CD8-positive, alpha-beta T cell (primary cell): ENCODE measurements at regions of chr16 and their contacts with region 1.

Region 1: GRCh38 chr16:31179747-31180459 is at the start of gene FUS:
- DNase-seq: peak; percentile 86 to 97 (median 90)
- ATAC-seq: peak; percentile 73
- H3K4me3 ChIP-seq: peak within 1 kb of the TSS; percentile 80 to 90
- H3K4me3 Mint-ChIP-seq: peak within 1 kb of the TSS; percentile 98
- H3K27ac ChIP-seq: peak within 1 kb of the TSS; percentile 88 to 95
- H3K27ac Mint-ChIP-seq: peak within 1 kb of the TSS; percentile 99
- H3K4me1 ChIP-seq: peaks cover 63% of the 10 kb centered on the region
- H3K4me1 Mint-ChIP-seq: peaks cover 60% of the 10 kb centered on the region
- H3K27me3 ChIP-seq: no peaks in the 10 kb centered on the region
- H3K27me3 Mint-ChIP-seq: no peaks in the 10 kb centered on the region
- CTCF ChIP-seq: no peak
- total RNA-seq, gene FUS: 734 to 742 TPM

Region 2: DNA sequence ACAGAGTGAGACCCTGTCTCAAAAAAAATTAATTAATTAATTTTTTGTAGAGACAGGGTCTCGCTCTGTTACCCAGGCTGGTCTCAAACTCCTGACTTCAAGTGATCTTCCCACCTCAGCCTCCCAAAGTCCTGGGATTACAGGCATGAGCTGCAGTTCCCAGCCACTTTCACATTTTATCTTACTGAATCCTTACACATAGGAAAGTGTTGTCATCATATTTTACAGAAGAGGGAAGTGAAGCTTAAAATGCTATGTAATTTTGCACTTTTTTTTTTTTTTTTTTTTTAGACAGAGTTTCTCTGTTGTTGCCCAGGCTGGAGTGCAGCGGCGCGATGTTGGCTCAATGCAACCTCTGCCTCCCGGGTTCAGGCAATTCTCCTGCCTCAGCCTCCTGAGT is 371.8 kb before region 1 on chr16:
- CTCF ChIA-PET with region 1: no interaction called
- POLR2A ChIA-PET with region 1: no interaction called
- intact Hi-C with region 1: no loop called
- DNase-seq: no peak
- ATAC-seq: no peak
- H3K4me3 ChIP-seq: no peak overlapping the region
- H3K4me3 Mint-ChIP-seq: no peak overlapping the region
- H3K27ac ChIP-seq: no peak overlapping the region
- H3K27ac Mint-ChIP-seq: no peak overlapping the region
- H3K4me1 ChIP-seq: peaks cover 18% of the 10 kb centered on the region
- H3K4me1 Mint-ChIP-seq: peaks cover 17% of the 10 kb centered on the region
- H3K27me3 ChIP-seq: no peaks in the 10 kb centered on the region
- H3K27me3 Mint-ChIP-seq: no peaks in the 10 kb centered on the region
- CTCF ChIP-seq: no peak

Region 3: DNA sequence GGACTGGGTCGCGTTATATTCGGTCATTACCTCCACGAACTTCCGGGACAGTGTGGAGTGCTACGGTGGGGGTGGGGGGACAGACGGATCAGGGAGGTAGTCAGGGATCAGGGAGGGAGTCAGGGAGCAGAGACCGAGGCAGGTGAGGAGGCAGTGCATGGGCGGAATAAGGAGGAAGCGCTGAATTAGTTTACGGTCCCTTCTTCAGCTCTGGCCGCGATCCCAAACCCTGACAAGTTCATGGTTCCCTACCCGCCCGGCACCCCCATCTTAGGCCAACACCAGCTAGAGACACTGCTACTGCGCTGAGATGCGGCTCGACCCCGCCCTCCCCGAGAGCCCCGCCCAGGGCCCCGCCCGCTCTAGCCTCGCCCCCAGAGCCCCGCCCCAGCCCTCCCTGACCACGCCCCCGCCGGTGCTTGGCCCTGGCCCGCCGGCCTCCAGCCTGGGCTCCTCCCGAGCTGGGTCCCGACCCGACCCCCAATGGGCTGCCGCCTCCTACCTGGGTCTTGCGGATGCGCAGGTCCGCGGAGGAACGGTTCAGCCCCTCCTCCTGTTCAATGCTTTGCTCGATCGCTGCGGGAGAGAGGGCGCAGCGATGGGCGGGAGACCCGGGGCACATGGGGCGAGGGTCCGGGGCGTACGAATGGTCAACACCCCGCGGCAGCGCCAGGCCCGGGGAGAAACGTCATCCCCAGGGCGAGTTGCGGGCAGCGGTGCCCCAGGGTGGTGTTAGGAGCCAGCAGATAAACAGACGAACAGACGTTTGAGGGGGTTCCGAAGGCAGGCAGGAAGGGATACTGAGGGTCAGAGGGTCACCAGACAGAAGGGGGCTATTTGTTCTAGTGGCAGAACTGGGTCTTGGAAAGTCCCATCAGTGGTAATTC is 182.7 kb before region 1 on chr16:
- CTCF ChIA-PET with region 1: no interaction called
- POLR2A ChIA-PET with region 1: no interaction called
- intact Hi-C with region 1: no loop called
- DNase-seq: peak; percentile 67 to 88 (median 80)
- ATAC-seq: peak; percentile 99
- H3K4me3 ChIP-seq: peak overlapping the region; percentile 61 to 93
- H3K4me3 Mint-ChIP-seq: peak overlapping the region; percentile 85
- H3K27ac ChIP-seq: peak overlapping the region; percentile 40 to 55
- H3K27ac Mint-ChIP-seq: peak overlapping the region; percentile 90
- H3K4me1 ChIP-seq: peaks cover 11% of the 10 kb centered on the region
- H3K4me1 Mint-ChIP-seq: peaks cover 10% of the 10 kb centered on the region
- H3K27me3 ChIP-seq: no peaks in the 10 kb centered on the region
- H3K27me3 Mint-ChIP-seq: no peaks in the 10 kb centered on the region
- CTCF ChIP-seq: no peak

Region 4: DNA sequence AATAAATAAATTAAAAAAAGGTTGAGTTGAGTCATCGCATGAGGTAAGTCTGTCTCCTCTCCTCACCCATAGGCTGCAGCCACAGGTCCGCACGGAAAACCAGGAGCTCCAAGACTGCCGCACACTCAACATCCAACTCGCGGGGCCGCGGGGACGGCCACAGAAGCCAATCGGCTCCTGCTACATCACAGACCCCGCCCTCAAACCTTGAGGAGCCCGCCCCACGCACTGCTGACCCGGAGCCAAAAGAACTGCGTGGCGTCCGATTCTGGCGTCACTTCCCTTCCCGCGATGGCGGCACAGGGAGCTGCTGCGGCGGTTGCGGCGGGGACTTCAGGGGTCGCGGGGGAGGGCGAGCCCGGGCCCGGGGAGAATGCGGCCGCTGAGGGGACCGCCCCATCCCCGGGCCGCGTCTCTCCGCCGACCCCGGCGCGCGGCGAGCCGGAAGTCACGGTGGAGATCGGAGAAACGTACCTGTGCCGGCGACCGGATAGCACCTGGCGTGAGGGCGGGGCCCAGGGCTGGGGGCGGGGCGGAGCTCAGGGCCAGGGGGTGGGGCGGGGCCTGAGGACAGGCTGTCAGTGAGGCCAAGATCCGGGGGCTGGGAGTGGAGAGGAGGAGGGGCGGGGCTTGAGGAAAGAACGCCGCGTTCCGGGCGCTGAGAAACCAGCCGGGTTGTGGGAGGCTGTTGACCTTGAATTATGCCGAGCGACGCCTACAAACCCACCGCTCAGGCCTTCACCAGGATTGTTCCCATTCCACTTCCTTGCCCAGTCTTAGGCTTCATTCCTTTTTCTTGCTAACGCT is 62.3 kb before region 1 on chr16 and contains the start of gene KAT8:
- CTCF ChIA-PET with region 1: no interaction called
- POLR2A ChIA-PET with region 1: interaction called, 33 read pairs
- intact Hi-C with region 1: loop called (anchors 1 to 2 kb)
- DNase-seq: peak; percentile 92 to 99 (median 97)
- ATAC-seq: peak; percentile 92
- H3K4me3 ChIP-seq: peak within 1 kb of the TSS; percentile 53 to 93
- H3K4me3 Mint-ChIP-seq: peak within 1 kb of the TSS; percentile 74
- H3K27ac ChIP-seq: peak within 1 kb of the TSS; percentile 83 to 96
- H3K27ac Mint-ChIP-seq: peak within 1 kb of the TSS; percentile 95
- H3K4me1 ChIP-seq: peaks cover 11% of the 10 kb centered on the region
- H3K4me1 Mint-ChIP-seq: peaks cover 18% of the 10 kb centered on the region
- H3K27me3 ChIP-seq: no peaks in the 10 kb centered on the region
- H3K27me3 Mint-ChIP-seq: no peaks in the 10 kb centered on the region
- CTCF ChIP-seq: no peak
- total RNA-seq, gene KAT8: 105 to 107 TPM

Region 5: DNA sequence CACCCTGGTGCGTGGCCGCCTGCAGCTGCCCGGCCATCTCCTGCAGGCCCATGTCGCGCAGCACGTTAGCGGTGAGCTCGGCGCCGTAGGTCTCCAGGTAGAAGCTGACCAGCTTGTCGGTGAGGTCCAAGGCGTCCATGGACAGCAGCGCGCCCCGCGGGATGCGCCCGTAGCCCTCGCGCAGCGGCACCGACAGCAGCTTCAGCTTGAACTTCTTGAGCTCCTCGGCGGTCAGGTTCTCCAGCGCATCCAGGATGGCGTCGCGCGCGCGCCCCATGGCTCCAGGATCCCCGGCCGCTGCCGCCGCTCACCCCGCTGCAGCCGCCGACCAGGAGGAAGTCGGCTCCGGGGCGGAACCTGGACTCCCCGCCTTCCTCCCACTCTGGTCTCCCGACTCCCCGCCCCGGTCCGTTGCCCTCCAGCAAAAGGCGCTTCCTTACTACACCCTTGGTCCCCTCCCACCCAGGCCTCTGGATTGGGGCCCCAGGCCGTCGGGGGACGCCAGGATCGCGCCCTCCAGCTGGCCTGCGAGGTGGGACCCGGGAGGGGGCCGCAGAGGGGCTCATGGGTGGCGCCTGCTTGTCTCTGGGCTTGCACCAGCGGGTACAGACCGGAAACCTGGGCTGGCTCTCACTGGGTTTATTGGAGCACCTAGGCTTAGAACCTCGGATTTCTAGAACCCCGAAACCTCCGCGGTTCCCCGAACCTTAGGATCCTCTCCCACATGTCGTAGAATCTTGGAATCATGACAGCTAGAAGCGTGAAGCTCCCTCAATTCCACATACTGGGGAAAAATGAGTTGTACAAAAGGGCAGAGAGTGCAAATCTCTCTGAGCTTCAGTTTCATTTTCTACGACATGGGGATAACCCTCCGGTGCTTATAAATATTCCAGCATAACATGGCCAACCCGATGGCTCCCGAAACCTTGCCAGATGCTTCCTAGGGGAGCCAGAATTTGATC is 22.8 kb after region 1 on chr16 and contains the start of gene PYCARD:
- CTCF ChIA-PET with region 1: interaction called, 5 read pairs
- POLR2A ChIA-PET with region 1: interaction called, 104 read pairs
- intact Hi-C with region 1: loop called (anchors 2 kb)
- DNase-seq: peak in 5 of 9 experiments; percentile 21 to 59 (median 43)
- ATAC-seq: peak; percentile 24
- H3K4me3 ChIP-seq: peak within 1 kb of the TSS; percentile 93 to 96
- H3K4me3 Mint-ChIP-seq: peak within 1 kb of the TSS; percentile 91
- H3K27ac ChIP-seq: peak within 1 kb of the TSS; percentile 53 to 64
- H3K27ac Mint-ChIP-seq: peak within 1 kb of the TSS; percentile 88
- H3K4me1 ChIP-seq: peaks cover 46% of the 10 kb centered on the region
- H3K4me1 Mint-ChIP-seq: peaks cover 46% of the 10 kb centered on the region
- H3K27me3 ChIP-seq: no peaks in the 10 kb centered on the region
- H3K27me3 Mint-ChIP-seq: no peaks in the 10 kb centered on the region
- CTCF ChIP-seq: no peak
- total RNA-seq, gene PYCARD: 6.4 to 6.6 TPM

Region 6: GRCh38 chr16:31224092-31224955 is 44.4 kb after region 1 on chr16:
- CTCF ChIA-PET with region 1: no interaction called
- POLR2A ChIA-PET with region 1: no interaction called
- intact Hi-C with region 1: no loop called
- DNase-seq: no peak
- ATAC-seq: no peak
- H3K4me3 ChIP-seq: no peak overlapping the region
- H3K4me3 Mint-ChIP-seq: no peak overlapping the region
- H3K27ac ChIP-seq: no peak overlapping the region
- H3K27ac Mint-ChIP-seq: no peak overlapping the region
- H3K4me1 ChIP-seq: no peaks in the 10 kb centered on the region
- H3K4me1 Mint-ChIP-seq: no peaks in the 10 kb centered on the region
- H3K27me3 ChIP-seq: peaks cover 0 to 3% of the 10 kb centered on the region in 2 experiments
- H3K27me3 Mint-ChIP-seq: peaks cover 4% of the 10 kb centered on the region
- CTCF ChIP-seq: no peak

Region 7: GRCh38 chr16:31382485-31383161 is 202.7 kb after region 1 on chr16:
- CTCF ChIA-PET with region 1: interaction called, 4 read pairs
- POLR2A ChIA-PET with region 1: interaction called, 4 read pairs
- intact Hi-C with region 1: loop called in 1 of 2 experiments (anchors 10 kb)
- DNase-seq: peak; percentile 35 to 81 (median 66)
- ATAC-seq: peak; percentile 60
- H3K4me3 ChIP-seq: no peak overlapping the region
- H3K4me3 Mint-ChIP-seq: no peak overlapping the region
- H3K27ac ChIP-seq: no peak overlapping the region
- H3K27ac Mint-ChIP-seq: no peak overlapping the region
- H3K4me1 ChIP-seq: peaks cover 1% of the 10 kb centered on the region
- H3K4me1 Mint-ChIP-seq: peaks cover 9% of the 10 kb centered on the region
- H3K27me3 ChIP-seq: no peaks in the 10 kb centered on the region
- H3K27me3 Mint-ChIP-seq: peaks cover 4% of the 10 kb centered on the region
- CTCF ChIP-seq: peak; percentile 72

Region 8: DNA sequence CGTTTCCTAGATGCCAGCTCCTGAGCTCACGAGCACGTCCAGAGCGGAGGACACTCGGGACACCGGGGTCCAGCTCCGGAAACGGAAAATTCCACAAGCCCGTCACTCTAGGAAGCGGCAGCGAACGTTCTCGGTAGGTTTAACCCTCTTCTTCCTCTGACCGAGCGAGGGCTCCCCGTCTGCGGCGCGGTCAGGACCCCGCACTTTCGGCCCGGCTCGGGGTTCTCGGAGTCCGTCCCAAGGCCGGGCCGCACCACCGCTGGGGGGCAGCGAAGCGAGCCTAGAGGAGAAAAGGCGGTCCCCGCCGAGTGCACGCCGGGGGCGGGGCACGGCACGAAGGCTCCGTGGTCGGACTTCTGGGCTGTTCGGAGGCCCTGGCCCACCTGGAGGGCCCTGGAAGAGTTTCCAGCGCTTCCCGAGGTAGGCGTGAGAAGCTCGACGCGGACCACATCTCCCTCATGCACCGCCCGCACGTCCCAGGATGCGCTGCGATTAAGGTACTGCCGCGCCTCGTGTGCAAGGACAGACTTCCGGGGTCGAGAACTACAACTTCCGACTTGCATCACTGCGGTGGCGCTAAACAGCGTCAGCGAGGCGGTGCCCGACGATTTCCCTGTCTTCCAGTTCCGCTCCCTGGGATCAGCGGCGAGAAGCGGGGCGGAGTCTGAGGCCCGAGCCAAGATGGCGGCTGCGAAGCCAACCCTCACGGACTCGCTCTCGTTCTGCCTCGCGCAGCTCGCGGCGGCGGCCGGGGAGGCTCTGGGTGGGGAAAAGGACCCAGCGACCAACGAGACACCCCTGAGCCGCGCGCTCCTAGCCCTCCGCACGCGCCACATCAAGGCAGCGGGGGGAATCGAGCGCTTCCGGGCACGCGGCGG is 279.2 kb after region 1 on chr16 and contains the start of gene ARMC5:
- CTCF ChIA-PET with region 1: no interaction called
- POLR2A ChIA-PET with region 1: interaction called, 31 read pairs
- intact Hi-C with region 1: loop called (anchors 1 kb)
- DNase-seq: peak; percentile 91 to 99 (median 96)
- ATAC-seq: peak; percentile 69
- H3K4me3 ChIP-seq: peak within 1 kb of the TSS; percentile 73 to 99
- H3K4me3 Mint-ChIP-seq: peak within 1 kb of the TSS; percentile 95
- H3K27ac ChIP-seq: peak within 1 kb of the TSS; percentile 97 to 100
- H3K27ac Mint-ChIP-seq: peak within 1 kb of the TSS; percentile 99
- H3K4me1 ChIP-seq: peaks cover 40% of the 10 kb centered on the region
- H3K4me1 Mint-ChIP-seq: peaks cover 50% of the 10 kb centered on the region
- H3K27me3 ChIP-seq: no peaks in the 10 kb centered on the region
- H3K27me3 Mint-ChIP-seq: no peaks in the 10 kb centered on the region
- CTCF ChIP-seq: peak; percentile 44
- total RNA-seq, gene ARMC5: 22.4 to 24.0 TPM

Region 9: GRCh38 chr16:31577411-31577810 is 397.5 kb after region 1 on chr16:
- CTCF ChIA-PET with region 1: no interaction called
- POLR2A ChIA-PET with region 1: no interaction called
- intact Hi-C with region 1: no loop called
- DNase-seq: no peak
- ATAC-seq: no peak
- H3K4me3 ChIP-seq: no peak overlapping the region
- H3K4me3 Mint-ChIP-seq: no peak overlapping the region
- H3K27ac ChIP-seq: no peak overlapping the region
- H3K27ac Mint-ChIP-seq: no peak overlapping the region
- H3K4me1 ChIP-seq: no peaks in the 10 kb centered on the region
- H3K4me1 Mint-ChIP-seq: no peaks in the 10 kb centered on the region
- H3K27me3 ChIP-seq: no peaks in the 10 kb centered on the region
- H3K27me3 Mint-ChIP-seq: peaks cover 7% of the 10 kb centered on the region
- CTCF ChIP-seq: no peak

Region 10: GRCh38 chr16:31868691-31869167 is 688.8 kb after region 1 on chr16:
- CTCF ChIA-PET with region 1: no interaction called
- POLR2A ChIA-PET with region 1: interaction called, 7 read pairs
- intact Hi-C with region 1: loop called in 1 of 2 experiments (anchors 5 kb)
- DNase-seq: peak; percentile 60 to 88 (median 82)
- ATAC-seq: peak; percentile 20
- H3K4me3 ChIP-seq: peak overlapping the region; percentile 33 to 48
- H3K4me3 Mint-ChIP-seq: peak overlapping the region; percentile 66
- H3K27ac ChIP-seq: peak overlapping the region; percentile 18 to 79
- H3K27ac Mint-ChIP-seq: peak overlapping the region; percentile 88
- H3K4me1 ChIP-seq: peaks cover 31% of the 10 kb centered on the region
- H3K4me1 Mint-ChIP-seq: peaks cover 47% of the 10 kb centered on the region
- H3K27me3 ChIP-seq: no peaks in the 10 kb centered on the region
- H3K27me3 Mint-ChIP-seq: no peaks in the 10 kb centered on the region
- CTCF ChIP-seq: peak; percentile 96